Transverse colon (tissue), 4 donors: ENCODE measurements at regions of chr3 and their contacts with region 1.

Region 1: DNA sequence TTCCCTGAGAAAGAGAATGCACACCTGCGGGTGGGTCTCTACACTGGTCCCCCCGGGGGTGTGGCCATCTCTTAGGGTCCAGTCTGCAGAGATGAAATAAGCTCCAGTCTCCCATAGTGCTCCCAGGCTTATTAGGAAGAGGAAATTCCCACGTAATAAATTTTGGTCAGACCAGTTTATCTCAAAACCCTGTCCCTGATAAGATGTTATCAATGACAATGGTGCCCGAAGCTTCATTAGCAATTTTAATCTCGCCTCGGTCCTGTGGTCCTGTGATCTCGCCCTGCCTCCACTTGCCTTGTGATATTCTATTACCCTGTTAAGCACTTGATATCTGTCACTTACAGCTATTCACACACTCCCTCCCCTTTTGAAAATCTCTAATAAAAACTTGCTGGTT is 46.8 kb downstream of the OR5H15 start:
- DNase-seq: no peak
- H3K4me3 ChIP-seq: no peak overlapping the region
- H3K27ac ChIP-seq: no peak overlapping the region
- H3K4me1 ChIP-seq: no peaks in the 10 kb centered on the region
- H3K27me3 ChIP-seq: no peaks in the 10 kb centered on the region
- CTCF ChIP-seq: no peak
- EP300 ChIP-seq: no peak
- POLR2A ChIP-seq: no peak

Region 2: DNA sequence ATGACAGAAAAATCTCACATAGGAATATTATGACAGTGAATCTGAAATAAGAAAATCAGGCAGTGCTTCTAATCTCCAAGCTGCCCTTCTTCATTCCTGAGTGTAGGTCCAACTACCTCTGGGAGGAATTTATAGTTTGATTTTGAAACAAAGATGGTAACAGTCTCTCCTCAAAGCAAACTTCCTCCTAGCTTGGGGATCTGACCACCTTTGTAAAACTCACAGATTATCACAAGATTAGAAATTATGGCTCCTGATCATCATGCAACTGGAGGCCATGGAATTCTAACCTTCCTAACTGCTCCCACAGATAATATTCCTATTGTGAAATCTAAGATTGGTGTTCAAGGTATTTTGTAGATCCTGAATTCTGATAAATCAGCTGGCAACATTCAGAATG is 58.6 kb before region 1 on chr3:
- in situ Hi-C with region 1: loop called in 1 of 4 experiments (anchors 5 kb)
- intact Hi-C with region 1: no loop called
- DNase-seq: no peak
- H3K4me3 ChIP-seq: no peak overlapping the region
- H3K27ac ChIP-seq: no peak overlapping the region
- H3K4me1 ChIP-seq: no peaks in the 10 kb centered on the region
- H3K27me3 ChIP-seq: no peaks in the 10 kb centered on the region
- CTCF ChIP-seq: no peak
- EP300 ChIP-seq: no peak
- POLR2A ChIP-seq: no peak